Activated CD8-positive, alpha-beta memory T cell treated with anti-CD3 and anti-CD28 coated beads, Interleukin-2, amount 10 ng/mL, durations not matched to agents 7 days and 5 days (primary cell): ENCODE measurements at regions of chr12 and their contacts with region 1.

Region 1: DNA sequence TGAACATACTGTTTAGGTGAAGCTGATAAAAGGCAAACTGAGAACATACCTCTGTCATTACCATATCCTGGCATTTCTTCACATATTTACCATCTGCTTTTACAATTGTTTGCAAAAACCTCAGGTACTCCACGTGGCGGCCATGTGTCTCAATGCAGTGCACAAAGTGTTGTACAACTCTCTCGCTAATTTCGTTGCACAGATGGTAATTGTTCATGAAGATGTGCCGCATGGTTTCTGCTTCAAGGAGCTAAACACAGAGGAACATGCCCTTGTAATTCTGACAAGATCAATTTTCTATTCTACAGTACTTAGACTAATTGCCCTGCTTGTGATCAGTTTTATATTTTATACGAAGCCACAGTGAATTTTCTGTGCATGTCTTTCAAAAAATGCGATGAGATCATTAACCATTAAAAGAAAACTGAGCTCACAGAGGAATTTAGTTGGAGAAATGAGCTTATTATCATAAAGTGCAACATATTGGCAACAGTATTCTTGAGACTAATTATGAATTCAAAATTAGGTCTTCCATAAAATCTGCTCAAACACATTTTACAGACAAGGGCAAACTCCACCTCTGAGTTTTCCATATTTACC is 233.8 kb downstream of the ITPR2 start:
- DNase-seq: no peak
- ATAC-seq: no peak
- H3K4me3 Mint-ChIP-seq: no peak overlapping the region
- H3K27ac Mint-ChIP-seq: no peak overlapping the region
- H3K4me1 Mint-ChIP-seq: no peaks in the 10 kb centered on the region
- H3K27me3 Mint-ChIP-seq: no peaks in the 10 kb centered on the region

Region 2: DNA sequence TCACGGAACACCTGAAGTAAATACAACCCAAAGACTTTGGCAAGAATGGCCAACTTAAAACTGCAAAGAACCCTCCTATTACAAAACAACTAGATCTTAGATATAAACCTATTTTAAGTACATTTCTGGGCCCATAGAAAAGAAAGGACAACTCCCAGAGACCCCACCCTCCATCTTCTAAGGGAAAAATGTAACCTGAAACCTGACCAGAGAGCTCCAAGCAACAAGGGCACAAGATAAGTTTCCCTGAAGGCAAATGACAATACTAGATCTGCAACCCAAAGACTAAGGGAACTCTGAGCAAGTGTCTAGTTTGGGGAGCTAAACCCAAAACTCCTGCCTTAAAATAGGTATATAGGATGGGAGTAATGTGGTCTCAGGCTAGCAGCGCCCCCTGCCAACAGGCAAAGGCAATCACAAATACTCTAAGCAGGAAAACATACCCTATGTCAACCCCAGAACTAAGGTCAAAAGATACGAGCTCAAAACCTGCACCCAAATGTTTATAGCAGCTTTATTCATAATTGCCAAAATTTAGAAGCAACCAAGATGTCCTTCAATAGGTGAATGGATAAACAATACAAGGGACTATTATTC is 14.9 kb after region 1 on chr12:
- CTCF ChIA-PET with region 1: interaction called, 10 read pairs
- DNase-seq: no peak
- ATAC-seq: no peak
- H3K4me3 Mint-ChIP-seq: no peak overlapping the region
- H3K27ac Mint-ChIP-seq: no peak overlapping the region
- H3K4me1 Mint-ChIP-seq: no peaks in the 10 kb centered on the region
- H3K27me3 Mint-ChIP-seq: no peaks in the 10 kb centered on the region